ENCODE measurements at regions of chr1 and their contacts with region 1.

Region 1: DNA sequence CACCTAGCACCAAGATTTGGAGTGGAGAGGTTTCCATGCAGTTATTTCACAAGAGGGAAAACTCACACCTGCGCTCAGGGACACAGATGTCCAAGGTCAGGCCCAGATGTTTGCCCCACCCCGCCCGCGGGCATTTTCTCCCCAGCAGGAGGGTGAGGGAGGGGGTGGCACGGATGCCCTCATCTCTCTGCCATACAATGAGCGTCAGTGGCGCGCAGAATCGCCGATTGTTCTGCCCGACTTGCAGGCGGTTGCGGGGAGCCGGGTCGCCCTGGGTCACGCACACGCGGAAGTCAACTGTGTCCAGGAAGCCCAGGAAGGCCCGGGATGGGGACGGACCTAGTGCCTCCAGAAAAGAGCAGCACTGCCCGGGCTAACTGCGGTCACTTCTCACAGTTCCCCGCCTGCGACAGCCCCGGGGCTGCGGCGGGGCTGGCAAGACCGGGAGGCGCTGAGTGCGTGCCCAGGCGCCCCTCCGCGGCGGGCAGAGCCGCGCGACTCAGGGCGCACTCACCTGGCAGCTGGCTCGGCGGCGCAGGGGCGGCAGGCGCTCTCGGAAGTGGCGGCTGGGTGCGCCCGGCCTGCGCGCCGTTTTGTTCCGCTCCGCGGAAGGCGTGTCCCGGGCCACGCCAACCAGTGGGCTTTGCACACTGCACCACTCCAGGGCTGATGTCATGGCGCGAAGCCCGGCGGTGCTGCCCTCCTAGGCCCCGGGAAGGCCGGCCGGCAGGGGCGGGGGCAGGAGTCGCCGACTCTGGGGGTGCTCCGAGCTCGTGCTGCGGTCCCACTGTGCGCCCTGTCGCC is at the start of gene CSRP1:
- DNase-seq: peak; percentile 88 to 98
- ATAC-seq: peak; percentile 82 to 85
- H3K4me3 ChIP-seq: peak within 1 kb of the TSS; percentile 66
- H3K27ac ChIP-seq: peak within 1 kb of the TSS; percentile 87 to 96
- H3K4me1 ChIP-seq: peaks cover 62% of the 10 kb centered on the region
- CTCF ChIP-seq: no peak; the same call in 2 of the 3 replicates
- EP300 ChIP-seq: no peak
- POLR2A ChIP-seq: peak; percentile 92
- RAD21 ChIP-seq: no peak; a peak in 1 of 5 replicates
- polyA plus RNA-seq, gene CSRP1: 256 and 277 TPM in 2 replicates

Region 2: DNA sequence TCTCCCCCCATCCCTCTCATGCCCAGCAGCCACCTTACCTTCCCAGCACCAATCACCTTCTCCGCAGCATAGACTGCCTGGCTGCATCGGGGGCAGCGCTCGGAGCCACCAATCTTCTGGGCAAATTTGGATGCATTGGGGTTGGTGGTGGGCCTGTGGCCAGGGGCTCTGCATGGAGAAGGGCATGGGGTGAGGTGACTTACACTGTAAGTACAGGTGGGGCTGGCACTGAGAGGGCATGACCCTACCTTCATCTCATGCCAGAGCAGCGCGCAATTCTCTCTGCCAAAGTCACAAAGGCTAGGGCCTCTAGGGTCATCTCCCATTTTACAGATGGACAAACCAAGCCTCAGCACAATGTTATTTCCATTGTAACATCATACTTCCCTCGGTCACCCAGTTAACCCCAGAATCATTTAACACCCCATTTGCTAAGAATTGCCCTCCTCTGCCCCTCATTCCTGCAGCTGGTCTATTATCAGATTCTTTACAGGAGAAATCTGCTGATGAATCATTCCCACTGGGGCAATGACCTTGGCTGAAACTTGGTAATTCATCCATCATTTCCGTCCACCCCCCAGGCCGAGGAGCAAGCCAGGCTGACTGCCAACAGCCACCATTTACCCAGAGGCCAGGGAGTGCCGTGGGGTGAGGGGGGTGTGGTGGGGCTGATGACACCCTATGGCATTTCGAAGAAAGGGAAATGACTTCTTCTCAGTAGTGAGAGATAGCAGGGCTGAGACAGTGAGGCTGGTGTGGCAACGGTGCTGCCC is 17.8 kb before region 1 on chr1:
- CTCF ChIA-PET with region 1: interaction called, 1,452 read pairs
- POLR2A ChIA-PET with region 1: interaction called, 16 read pairs
- DNase-seq: peak; percentile 88 to 90
- ATAC-seq: peak; percentile 66 to 76
- H3K4me3 ChIP-seq: peak overlapping the region; percentile 26
- H3K27ac ChIP-seq: peak overlapping the region; percentile 86 to 90
- H3K4me1 ChIP-seq: peaks cover 84% of the 10 kb centered on the region
- CTCF ChIP-seq: no peak
- EP300 ChIP-seq: peak; percentile 71 to 91; a peak in 3 of 5 replicates
- POLR2A ChIP-seq: no peak
- RAD21 ChIP-seq: 0 out of 5 replicates have a peak, but pooled peaks of 1 of the 2 experiments have one; percentile 15